Dendritic cell treated with granulocyte-macrophage colony-stimulating factor and Interleukin-4, amounts not matched to agents 40 ng/mL and 50 ng/mL, for 4 days (primary cell): ENCODE measurements at regions of chr2 and their contacts with region 1.

Region 1: GRCh38 chr2:118013724-118014491 is at the start of gene CCDC93:
- H3K4me3 Mint-ChIP-seq: peak within 1 kb of the TSS; percentile 91
- H3K27ac Mint-ChIP-seq: peak within 1 kb of the TSS; percentile 93
- H3K4me1 Mint-ChIP-seq: peaks cover 72% of the 10 kb centered on the region
- H3K27me3 Mint-ChIP-seq: no peaks in the 10 kb centered on the region

Region 2: GRCh38 chr2:118032169-118033013 is 18.5 kb after region 1 on chr2:
- intact Hi-C with region 1: loop called (anchors 2 kb)
- H3K4me3 Mint-ChIP-seq: no peak overlapping the region
- H3K27ac Mint-ChIP-seq: peak overlapping the region; percentile 7
- H3K4me1 Mint-ChIP-seq: peaks cover 21% of the 10 kb centered on the region
- H3K27me3 Mint-ChIP-seq: peaks cover 42% of the 10 kb centered on the region

Region 3: GRCh38 chr2:118056165-118056534 is 42.2 kb after region 1 on chr2:
- intact Hi-C with region 1: loop called (anchors 5 kb)
- H3K4me3 Mint-ChIP-seq: no peak overlapping the region
- H3K27ac Mint-ChIP-seq: peak overlapping the region; percentile 94
- H3K4me1 Mint-ChIP-seq: peaks cover 56% of the 10 kb centered on the region
- H3K27me3 Mint-ChIP-seq: no peaks in the 10 kb centered on the region